GM10248 (cell line): ENCODE measurements at regions of chr5 and their contacts with region 1.

Region 1: GRCh38 chr5:103188436-103188835 is 68.3 kb downstream of the PPIP5K2 start:
- DNase-seq: no peak
- CTCF ChIP-seq: no peak

Region 2: DNA sequence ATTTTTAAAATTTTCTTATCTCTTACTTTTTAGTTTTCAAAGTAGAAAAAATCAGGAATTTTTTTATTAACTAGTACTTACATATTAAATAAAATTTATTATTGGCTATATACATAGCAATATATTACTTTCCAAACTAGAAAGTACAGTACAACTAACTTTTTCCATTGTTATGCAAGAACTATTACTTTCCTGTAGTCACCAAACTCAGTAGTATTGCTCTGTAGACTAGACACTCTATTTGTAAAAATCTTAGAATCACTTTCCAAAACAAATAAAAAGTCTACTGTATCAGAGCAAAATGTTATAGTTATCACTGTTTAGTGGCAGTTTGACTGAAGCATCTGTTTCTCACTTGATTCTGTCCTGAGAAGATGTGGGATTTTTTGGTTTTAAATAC is 14.8 kb after region 1 on chr5:
- CTCF ChIA-PET with region 1: interaction called, 11 read pairs
- POLR2A ChIA-PET with region 1: no interaction called
- DNase-seq: no peak
- CTCF ChIP-seq: no peak